ENCODE measurements at regions of chr19 and their contacts with region 1.

Region 1: DNA sequence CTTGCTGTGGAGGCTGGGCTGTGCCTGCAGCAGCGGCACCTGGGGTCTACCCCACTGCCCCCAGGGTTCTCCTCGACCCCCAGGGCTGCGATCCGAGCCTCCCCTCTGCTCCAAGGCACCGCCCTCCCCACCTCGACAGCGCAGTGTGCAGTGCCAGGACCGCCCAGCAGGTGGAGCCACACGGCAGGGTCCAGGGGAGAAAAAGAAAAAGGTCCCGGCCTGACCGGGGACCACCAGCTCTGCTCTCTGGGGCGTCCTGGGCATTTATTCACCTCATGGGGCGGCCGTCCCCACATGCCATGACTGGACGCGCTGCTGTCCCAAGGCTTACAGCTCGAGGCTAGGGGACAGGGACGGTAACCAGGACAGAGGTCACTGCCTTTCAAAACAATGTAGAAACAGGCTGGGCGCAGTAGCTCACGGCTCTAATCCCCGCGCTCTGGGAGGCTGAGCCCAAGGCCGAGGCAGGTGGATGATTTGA is 10.6 kb downstream of the REXO1 start:
- DNase-seq: no peak
- ATAC-seq: peak; percentile 82
- H3K4me3 ChIP-seq: no peak overlapping the region
- H3K27ac ChIP-seq: peak overlapping the region; percentile 57
- H3K4me1 ChIP-seq: peaks cover 9 to 23% of the 10 kb centered on the region in 2 experiments; a peak in 3 of 4 replicates
- H3K27me3 ChIP-seq: no peaks in the 10 kb centered on the region
- CTCF ChIP-seq: peak; percentile 54 to 99 (median 97); a peak in 5 of 6 replicates
- POLR2A ChIP-seq: no peak
- RAD21 ChIP-seq: peak; percentile 61; the same call in 1 of the 2 replicates

Region 2: DNA sequence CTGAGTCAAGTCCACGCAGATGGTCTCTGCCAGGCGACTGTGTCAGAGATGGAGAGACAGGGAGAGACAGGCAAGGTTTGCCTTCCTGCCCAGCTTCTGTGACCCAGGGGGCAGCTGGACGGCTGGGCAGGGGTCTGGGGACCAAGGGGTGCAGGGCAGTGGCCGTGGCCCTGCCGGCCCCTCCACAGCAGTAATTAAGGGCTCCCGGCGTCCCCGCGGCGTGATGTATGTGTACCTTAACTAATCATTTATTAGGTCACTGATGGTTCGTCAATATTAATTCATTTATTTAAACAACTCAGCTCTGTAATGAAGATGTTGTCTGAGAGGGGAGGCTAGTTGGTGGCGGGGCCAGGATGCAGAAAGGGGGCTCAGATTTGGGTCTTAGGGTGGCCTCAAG is 156.7 kb before region 1 on chr19:
- CTCF ChIA-PET with region 1: no interaction called
- POLR2A ChIA-PET with region 1: no interaction called
- RAD21 ChIA-PET with region 1: no interaction called
- intact Hi-C with region 1: no loop called
- DNase-seq: no peak
- ATAC-seq: no peak
- H3K4me3 ChIP-seq: no peak overlapping the region
- H3K27ac ChIP-seq: no peak overlapping the region
- H3K4me1 ChIP-seq: peaks cover 0 to 3% of the 10 kb centered on the region in 2 experiments; a peak in 2 of 4 replicates
- H3K27me3 ChIP-seq: no peaks in the 10 kb centered on the region
- CTCF ChIP-seq: no peak
- POLR2A ChIP-seq: no peak
- RAD21 ChIP-seq: no peak

Region 3: DNA sequence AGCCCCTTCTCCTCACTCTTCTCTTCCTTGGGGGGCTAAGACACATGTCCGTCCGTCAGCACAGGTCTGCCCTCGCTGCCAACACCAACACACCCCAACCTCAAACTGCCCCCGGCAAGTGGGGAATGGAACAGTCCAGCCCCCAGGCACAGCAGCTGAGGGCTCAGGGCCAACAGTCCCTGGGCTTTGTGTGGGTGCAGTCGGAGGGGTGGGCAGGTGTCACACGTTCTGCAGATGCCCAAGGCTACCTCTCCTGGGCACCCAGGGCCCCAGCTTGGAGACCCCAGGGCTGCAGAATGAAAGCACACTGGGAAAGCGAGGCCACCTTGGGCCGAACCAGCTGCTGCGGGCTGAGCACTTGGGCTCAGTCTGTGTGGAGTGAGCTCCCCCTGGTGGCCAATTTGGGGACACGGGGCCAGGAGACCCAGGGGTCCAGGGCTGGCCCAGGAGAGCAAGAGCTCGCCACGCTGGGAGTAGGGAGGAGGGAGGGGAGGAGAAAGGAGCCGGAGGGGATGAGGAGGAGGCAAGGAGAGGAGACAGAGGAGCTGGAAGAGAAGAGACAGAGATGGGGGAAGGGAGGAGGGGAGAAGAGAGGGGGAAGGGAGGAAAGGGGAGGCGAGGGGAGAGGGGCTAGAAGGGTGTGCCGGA is 11.6 kb before region 1 on chr19:
- CTCF ChIA-PET with region 1: interaction called, 33 read pairs
- POLR2A ChIA-PET with region 1: no interaction called
- RAD21 ChIA-PET with region 1: no interaction called
- intact Hi-C with region 1: no loop called
- DNase-seq: no peak
- ATAC-seq: peak; percentile 89
- H3K4me3 ChIP-seq: no peak overlapping the region
- H3K27ac ChIP-seq: no peak overlapping the region; the same call in 1 of the 2 replicates
- H3K4me1 ChIP-seq: peaks cover 4 to 7% of the 10 kb centered on the region in 2 experiments; a peak in 3 of 4 replicates
- H3K27me3 ChIP-seq: no peaks in the 10 kb centered on the region
- CTCF ChIP-seq: peak; percentile 66 to 96 (median 92); a peak in 5 of 6 replicates
- POLR2A ChIP-seq: no peak
- RAD21 ChIP-seq: peak; percentile 79

Region 4: GRCh38 chr19:1848399-1849131 is 10.9 kb after region 1 on chr19 and contains the start of gene REXO1:
- CTCF ChIA-PET with region 1: interaction called, 10 read pairs
- POLR2A ChIA-PET with region 1: no interaction called
- RAD21 ChIA-PET with region 1: no interaction called
- intact Hi-C with region 1: no loop called
- DNase-seq: peak; percentile 88
- ATAC-seq: peak; percentile 69
- H3K4me3 ChIP-seq: peak within 1 kb of the TSS; percentile 88 to 98
- H3K27ac ChIP-seq: peak within 1 kb of the TSS; percentile 99
- H3K4me1 ChIP-seq: peaks cover 33 to 46% of the 10 kb centered on the region in 2 experiments
- H3K27me3 ChIP-seq: no peaks in the 10 kb centered on the region
- CTCF ChIP-seq: peak; percentile 92
- POLR2A ChIP-seq: no peak
- RAD21 ChIP-seq: no peak
- total RNA-seq, gene REXO1: 52.2 TPM